ENCODE measurements at regions of chr3 and their contacts with region 1.

Region 1: DNA sequence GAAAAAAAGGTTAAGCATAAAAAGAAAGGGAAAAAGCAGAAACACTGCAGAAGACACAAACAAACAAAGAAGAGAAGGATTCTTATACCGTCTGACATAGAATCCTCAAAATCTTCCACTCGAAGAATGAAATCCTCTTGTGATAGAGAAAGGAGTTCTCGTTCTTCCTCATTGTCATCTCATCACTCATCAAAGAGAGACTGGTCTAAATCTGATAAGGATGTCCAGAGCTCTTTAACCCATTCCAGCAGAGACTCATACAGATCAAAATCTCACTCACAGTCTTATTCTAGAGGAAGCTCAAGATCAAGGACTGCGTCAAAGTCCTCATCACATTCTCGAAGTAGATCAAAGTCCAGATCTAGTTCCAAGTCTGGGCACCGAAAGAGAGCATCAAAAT is 16.5 kb upstream of the ZBTB47 start:
- DNase-seq: no peak
- H3K4me3 Mint-ChIP-seq: no peak overlapping the region
- H3K27ac Mint-ChIP-seq: no peak overlapping the region
- H3K4me1 Mint-ChIP-seq: peaks cover 18% of the 10 kb centered on the region
- H3K27me3 Mint-ChIP-seq: no peaks in the 10 kb centered on the region

Region 2: GRCh38 chr3:42581709-42582473 is 55.1 kb before region 1 on chr3 and contains the start of gene SEC22C:
- CTCF ChIA-PET with region 1: interaction called, 11 read pairs
- DNase-seq: peak; percentile 97
- H3K4me3 Mint-ChIP-seq: peak within 1 kb of the TSS; percentile 83
- H3K27ac Mint-ChIP-seq: peak within 1 kb of the TSS; percentile 96
- H3K4me1 Mint-ChIP-seq: peaks cover 60% of the 10 kb centered on the region
- H3K27me3 Mint-ChIP-seq: no peaks in the 10 kb centered on the region

Region 3: DNA sequence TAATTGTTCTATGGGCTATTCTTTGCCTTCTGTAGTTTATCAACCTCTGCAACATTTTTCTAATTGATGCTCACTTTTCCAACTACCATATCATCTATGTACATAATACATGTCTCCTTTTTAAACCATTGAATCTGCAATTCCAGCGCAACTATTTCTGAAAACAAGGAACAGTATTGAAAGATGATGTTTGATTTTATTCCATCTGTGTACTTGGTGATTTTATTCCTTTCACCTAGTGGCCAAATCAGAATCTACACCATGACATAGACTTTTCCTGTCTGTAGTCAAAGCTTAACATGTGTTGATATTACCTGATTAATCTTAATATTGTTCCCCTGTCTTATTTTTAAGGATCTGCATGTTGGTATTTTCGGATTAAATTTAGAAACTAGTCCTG is 23.5 kb before region 1 on chr3:
- CTCF ChIA-PET with region 1: interaction called, 13 read pairs
- DNase-seq: no peak
- H3K4me3 Mint-ChIP-seq: no peak overlapping the region
- H3K27ac Mint-ChIP-seq: peak overlapping the region; percentile 1
- H3K4me1 Mint-ChIP-seq: peaks cover 44% of the 10 kb centered on the region
- H3K27me3 Mint-ChIP-seq: no peaks in the 10 kb centered on the region

Region 4: GRCh38 chr3:42853739-42854302 is 216.8 kb after region 1 on chr3:
- CTCF ChIA-PET with region 1: no interaction called
- DNase-seq: no peak
- H3K4me3 Mint-ChIP-seq: no peak overlapping the region
- H3K27ac Mint-ChIP-seq: no peak overlapping the region
- H3K4me1 Mint-ChIP-seq: no peaks in the 10 kb centered on the region
- H3K27me3 Mint-ChIP-seq: peaks cover 32% of the 10 kb centered on the region